ENCODE measurements at regions of chr17 and their contacts with region 1.

Region 1: DNA sequence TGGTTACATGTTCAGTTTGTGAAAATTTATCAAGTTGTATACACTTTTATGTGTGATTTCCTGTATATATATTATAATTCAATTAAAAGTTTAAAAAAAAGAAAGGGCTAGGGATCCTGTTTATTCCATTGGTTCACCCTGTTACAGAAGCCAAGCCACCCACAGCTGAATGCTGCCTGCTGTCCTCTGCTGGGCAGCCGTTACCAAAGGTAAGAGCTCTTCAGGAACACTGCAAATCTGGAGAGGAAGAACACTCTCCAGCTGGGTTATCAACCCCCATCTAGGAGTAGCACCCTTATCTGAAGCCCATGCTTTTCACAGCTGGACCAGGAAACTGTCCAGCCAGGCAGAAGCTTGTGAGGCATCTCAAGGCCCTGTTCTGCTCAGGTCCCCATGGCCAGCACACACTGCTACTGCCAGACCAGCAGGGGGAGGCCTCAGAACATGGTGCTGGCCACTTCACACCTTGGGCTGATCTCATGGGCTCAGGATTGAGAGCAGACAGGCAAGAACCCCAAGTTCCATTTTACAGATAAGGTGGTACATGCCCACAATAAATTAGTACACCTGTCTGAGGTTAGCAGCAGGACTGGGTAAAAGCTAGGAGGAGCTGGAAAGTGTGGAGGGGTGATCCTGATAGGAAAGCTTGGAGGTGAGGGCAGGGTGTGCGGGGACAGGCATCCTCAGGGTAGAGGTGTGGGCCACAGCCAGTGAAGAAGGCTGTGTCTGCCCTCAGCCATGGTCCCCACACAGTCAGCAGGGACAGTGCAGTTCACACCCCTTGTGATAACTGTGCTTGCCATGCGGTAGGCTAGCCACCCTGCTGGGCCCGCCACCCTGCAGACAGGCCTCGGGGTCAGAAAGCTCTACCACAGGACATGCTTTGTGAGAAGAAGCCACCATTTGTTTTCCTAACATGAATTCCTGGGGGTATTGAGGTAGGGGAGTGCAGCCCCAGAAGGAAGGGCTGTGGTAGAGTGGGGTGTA is 54.3 kb upstream of the SREBF1 start:
- DNase-seq: peak; percentile 47 to 52
- ATAC-seq: peak; percentile 90

Region 2: GRCh38 chr17:17781591-17782496 is 109.2 kb before region 1 on chr17:
- intact Hi-C with region 1: no loop called
- DNase-seq: peak; percentile 67 to 77
- ATAC-seq: peak; percentile 42

Region 3: DNA sequence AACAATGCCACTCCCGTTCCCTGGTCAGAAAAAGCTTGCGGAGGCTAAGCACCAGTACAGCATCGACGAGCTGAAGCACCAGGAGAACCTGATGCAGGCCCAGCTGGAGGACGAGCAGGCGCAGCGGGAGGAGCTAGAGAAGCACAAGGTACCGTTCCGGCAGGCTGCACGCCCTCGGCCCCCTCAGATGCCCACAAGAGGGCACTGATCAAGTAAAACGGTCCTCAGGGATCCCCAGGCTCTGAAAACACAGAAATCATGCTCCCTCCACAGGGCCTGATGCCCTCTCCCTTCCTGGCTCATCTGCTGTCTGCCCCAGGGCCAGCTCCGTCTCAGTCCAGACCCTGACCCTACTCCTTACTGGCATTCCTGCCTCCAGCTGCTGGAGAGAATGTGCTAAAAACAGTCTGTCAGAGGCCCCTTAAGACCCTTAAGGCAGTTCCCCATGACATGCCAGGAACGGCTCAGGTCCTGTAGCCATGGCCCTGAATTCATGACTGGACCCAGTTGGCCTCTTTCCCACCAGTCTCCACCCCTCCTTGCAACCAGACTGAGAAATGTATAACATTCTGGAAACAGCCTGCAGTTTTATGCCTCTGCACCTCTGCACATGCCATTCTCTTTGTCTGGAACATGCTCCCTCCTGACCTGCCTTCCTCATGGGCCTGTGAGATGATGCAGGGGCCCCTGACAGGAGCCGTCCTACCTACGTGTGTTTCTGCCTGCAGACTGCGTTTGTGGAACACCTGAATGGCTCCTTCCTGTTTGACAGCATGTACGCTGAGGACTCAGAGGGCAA is 103.4 kb after region 1 on chr17:
- intact Hi-C with region 1: no loop called
- DNase-seq: no peak
- ATAC-seq: no peak

Region 4: GRCh38 chr17:18038861-18039534 is 147.9 kb after region 1 on chr17 and contains the starts of genes ATPAF2 and GID4:
- intact Hi-C with region 1: loop called in 1 of 2 experiments (anchors 10 kb)
- DNase-seq: peak; percentile 99 to 100
- ATAC-seq: peak; percentile 95
- total RNA-seq, gene ATPAF2: 29.0 to 32.0 TPM
- total RNA-seq, gene GID4: 4.7 to 7.0 TPM

Measured in left colon (tissue), 2 donors.